SK-N-SH (cell line): ENCODE measurements at regions of chr10 and their contacts with region 1.

Region 1: DNA sequence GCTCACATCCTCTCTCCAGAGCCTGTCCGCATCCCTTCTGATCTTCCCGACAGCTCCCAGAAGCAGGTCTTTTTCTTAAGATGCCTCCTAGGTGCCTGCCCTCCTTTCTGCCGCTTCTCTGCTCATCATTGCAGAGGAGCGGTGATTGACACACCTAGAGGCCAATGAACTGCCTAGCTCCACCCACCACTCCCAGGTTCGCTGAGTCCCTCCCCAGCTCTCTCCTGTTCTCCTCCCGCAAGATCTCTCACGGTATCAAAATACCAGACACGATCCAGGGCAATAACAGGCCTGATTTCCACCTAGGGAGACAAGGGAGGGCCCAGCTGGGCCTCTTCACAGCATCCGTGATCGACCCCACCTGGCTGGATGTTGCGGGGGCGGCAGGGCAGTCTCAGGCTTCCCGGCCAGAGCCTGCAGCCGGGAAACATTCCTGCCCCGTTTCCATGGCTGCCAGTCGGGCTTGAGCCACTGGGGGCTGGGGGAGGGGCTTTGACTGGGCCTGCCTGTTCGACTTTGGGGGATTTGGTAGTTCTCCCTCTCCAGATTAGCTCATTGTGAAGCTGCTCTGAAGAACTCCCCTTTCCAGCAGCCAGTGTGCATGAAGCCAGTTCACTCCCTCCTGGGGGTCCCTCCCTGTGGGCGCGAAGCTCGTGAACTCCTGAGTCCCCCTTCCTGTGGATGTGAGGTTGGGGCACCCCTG is 373.5 kb downstream of the RPS24 start:
- DNase-seq: peak; percentile 91
- H3K4me3 ChIP-seq: peak overlapping the region; percentile 55 to 58
- H3K27ac ChIP-seq: peak overlapping the region in 1 of 2 experiments; percentile 99; a peak in 2 of 4 replicates
- H3K4me1 ChIP-seq: peaks cover 0 to 62% of the 10 kb centered on the region in 2 experiments; a peak in 2 of 4 replicates
- H3K27me3 ChIP-seq: no peaks in the 10 kb centered on the region
- CTCF ChIP-seq: no peak
- EP300 ChIP-seq: no peak
- RAD21 ChIP-seq: no peak; the same call in 1 of the 2 replicates

Region 2: DNA sequence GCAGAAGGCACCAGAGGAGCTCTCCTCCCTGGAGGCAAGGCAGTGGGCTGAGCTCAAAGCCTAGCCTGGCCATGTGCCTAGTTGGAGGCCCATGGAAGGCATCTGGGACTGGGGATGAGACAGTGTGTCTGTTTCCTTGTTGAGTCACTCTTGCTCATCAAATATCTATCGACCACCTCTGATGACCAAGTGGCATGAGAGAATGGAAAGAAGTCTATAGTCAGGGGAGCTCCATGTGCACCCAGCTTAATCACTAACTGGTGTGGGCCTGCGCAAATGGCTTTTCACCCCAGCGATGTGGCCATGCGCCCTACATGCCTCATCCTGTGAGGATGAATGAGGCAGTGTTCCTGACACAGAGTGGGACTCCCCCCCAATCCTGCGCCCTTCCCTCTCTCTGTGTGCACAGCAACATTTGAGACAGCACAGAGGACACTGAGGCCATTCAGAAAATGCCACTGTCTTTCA is 143.6 kb before region 1 on chr10:
- CTCF ChIA-PET with region 1: no interaction called
- POLR2A ChIA-PET with region 1: no interaction called
- DNase-seq: no peak
- H3K4me3 ChIP-seq: no peak overlapping the region
- H3K27ac ChIP-seq: peak overlapping the region in 1 of 2 experiments; percentile 90; a peak in 3 of 4 replicates
- H3K4me1 ChIP-seq: peaks cover 17 to 54% of the 10 kb centered on the region in 2 experiments
- H3K27me3 ChIP-seq: no peaks in the 10 kb centered on the region
- CTCF ChIP-seq: no peak
- EP300 ChIP-seq: peak in 1 of 2 experiments; percentile 92; a peak in 1 of 4 replicates
- RAD21 ChIP-seq: no peak

Region 3: DNA sequence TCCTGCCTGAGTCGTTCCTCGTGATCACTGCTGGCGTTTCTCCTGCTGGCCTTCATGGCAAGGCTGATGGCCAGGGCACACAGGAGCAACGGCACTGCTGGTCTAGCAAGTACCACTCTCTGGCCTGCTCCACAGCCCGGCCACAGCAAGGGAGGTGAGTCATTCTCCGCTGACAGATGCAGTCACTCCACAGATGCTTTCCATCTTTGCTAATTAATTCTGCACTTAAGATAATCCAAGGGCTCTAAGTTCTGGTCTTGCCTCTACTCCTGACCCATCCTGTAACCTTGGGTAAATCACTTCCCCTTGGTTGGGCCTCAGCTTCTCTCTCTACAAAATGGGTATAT is 129.1 kb before region 1 on chr10:
- CTCF ChIA-PET with region 1: no interaction called
- POLR2A ChIA-PET with region 1: no interaction called
- DNase-seq: peak; percentile 36
- H3K4me3 ChIP-seq: no peak overlapping the region
- H3K27ac ChIP-seq: peak overlapping the region; percentile 18 to 32; a peak in 2 of 4 replicates
- H3K4me1 ChIP-seq: peaks cover 8 to 25% of the 10 kb centered on the region in 2 experiments; a peak in 2 of 4 replicates
- H3K27me3 ChIP-seq: no peaks in the 10 kb centered on the region
- CTCF ChIP-seq: no peak
- EP300 ChIP-seq: peak in 1 of 2 experiments; percentile 19; a peak in 1 of 4 replicates
- RAD21 ChIP-seq: no peak

Region 4: GRCh38 chr10:78302989-78303854 is 103.9 kb before region 1 on chr10:
- CTCF ChIA-PET with region 1: interaction called, 12 read pairs
- POLR2A ChIA-PET with region 1: interaction called, 3 read pairs
- DNase-seq: peak; percentile 99
- H3K4me3 ChIP-seq: peak overlapping the region; percentile 51 to 72
- H3K27ac ChIP-seq: peak overlapping the region; percentile 71 to 99
- H3K4me1 ChIP-seq: peaks cover 15 to 41% of the 10 kb centered on the region in 2 experiments; a peak in 3 of 4 replicates
- H3K27me3 ChIP-seq: no peaks in the 10 kb centered on the region
- CTCF ChIP-seq: peak; percentile 66
- EP300 ChIP-seq: peak; percentile 70 to 79; a peak in 3 of 4 replicates
- RAD21 ChIP-seq: peak; percentile 73

Region 5: GRCh38 chr10:78375852-78376785 is 31.0 kb before region 1 on chr10:
- CTCF ChIA-PET with region 1: no interaction called
- POLR2A ChIA-PET with region 1: no interaction called
- DNase-seq: no peak
- H3K4me3 ChIP-seq: no peak overlapping the region
- H3K27ac ChIP-seq: no peak overlapping the region; a peak in 1 of 4 replicates
- H3K4me1 ChIP-seq: peaks cover 0 to 26% of the 10 kb centered on the region in 2 experiments; a peak in 1 of 4 replicates
- H3K27me3 ChIP-seq: no peaks in the 10 kb centered on the region
- CTCF ChIP-seq: no peak
- EP300 ChIP-seq: no peak
- RAD21 ChIP-seq: no peak

Region 6: GRCh38 chr10:78432583-78432982 is 25.4 kb after region 1 on chr10:
- CTCF ChIA-PET with region 1: interaction called, 3 read pairs
- POLR2A ChIA-PET with region 1: interaction called, 11 read pairs
- DNase-seq: no peak
- H3K4me3 ChIP-seq: no peak overlapping the region
- H3K27ac ChIP-seq: peak overlapping the region in 1 of 2 experiments; percentile 99; a peak in 2 of 4 replicates
- H3K4me1 ChIP-seq: peaks cover 0 to 54% of the 10 kb centered on the region in 2 experiments; a peak in 2 of 4 replicates
- H3K27me3 ChIP-seq: no peaks in the 10 kb centered on the region
- CTCF ChIP-seq: no peak; the same call in 1 of the 2 replicates
- EP300 ChIP-seq: no peak
- RAD21 ChIP-seq: peak; percentile 63